Caco-2 (cell line): ENCODE measurements at regions of chr9 and their contacts with region 1.

Region 1: DNA sequence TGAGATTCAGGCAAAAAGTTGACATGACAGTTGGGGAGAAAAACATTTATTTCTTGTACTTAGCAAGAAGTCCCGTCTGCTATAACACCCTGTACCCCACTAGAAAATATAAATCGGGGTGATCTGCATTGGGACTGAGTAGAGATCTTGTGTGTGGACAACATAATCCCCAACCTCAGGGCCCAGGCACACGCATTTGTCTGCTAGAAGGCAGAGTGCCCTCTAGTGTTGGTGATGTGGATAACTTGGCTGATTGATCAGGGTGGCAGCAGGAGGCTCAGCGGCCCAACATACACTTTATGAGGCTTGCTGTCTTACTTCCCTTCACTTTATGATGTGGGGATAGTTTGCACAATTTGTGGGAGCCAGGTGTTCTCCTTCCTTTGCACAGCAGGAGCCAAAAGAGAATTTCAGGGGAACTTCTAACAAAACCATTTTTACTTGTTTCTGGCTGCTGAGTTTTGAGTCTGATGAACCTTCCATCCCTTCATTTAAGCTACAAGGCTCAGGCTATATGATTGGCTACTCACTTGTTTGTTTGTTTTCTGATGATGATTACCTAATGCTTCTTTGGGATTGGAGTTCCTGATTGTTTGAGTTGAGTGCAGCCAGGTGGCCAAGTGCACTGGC is 263.2 kb downstream of the DMAC1 start:
- DNase-seq: peak; percentile 48
- H3K4me3 ChIP-seq: no peak overlapping the region
- H3K4me3 Mint-ChIP-seq: no peak overlapping the region
- H3K27ac Mint-ChIP-seq: no peak overlapping the region
- H3K4me1 ChIP-seq: no peaks in the 10 kb centered on the region
- H3K4me1 Mint-ChIP-seq: no peaks in the 10 kb centered on the region
- H3K27me3 ChIP-seq: no peaks in the 10 kb centered on the region
- H3K27me3 Mint-ChIP-seq: peaks cover 18% of the 10 kb centered on the region
- CTCF ChIP-seq: peak; percentile 52 to 53

Region 2: GRCh38 chr9:6907772-6908381 is 628.5 kb before region 1 on chr9:
- CTCF ChIA-PET with region 1: no interaction called
- POLR2A ChIA-PET with region 1: no interaction called
- intact Hi-C with region 1: loop called (anchors 5 kb)
- DNase-seq: peak in 1 of 2 experiments; percentile 31
- H3K4me3 ChIP-seq: no peak overlapping the region
- H3K4me3 Mint-ChIP-seq: no peak overlapping the region
- H3K27ac Mint-ChIP-seq: no peak overlapping the region
- H3K4me1 ChIP-seq: peaks cover 8% of the 10 kb centered on the region; the same call in 1 of the 2 replicates
- H3K4me1 Mint-ChIP-seq: peaks cover 6% of the 10 kb centered on the region
- H3K27me3 ChIP-seq: no peaks in the 10 kb centered on the region
- H3K27me3 Mint-ChIP-seq: no peaks in the 10 kb centered on the region
- CTCF ChIP-seq: peak; percentile 59 to 61

Region 3: GRCh38 chr9:7273391-7273974 is 262.9 kb before region 1 on chr9:
- CTCF ChIA-PET with region 1: no interaction called
- POLR2A ChIA-PET with region 1: no interaction called
- intact Hi-C with region 1: loop called (anchors 1 kb)
- DNase-seq: peak in 1 of 2 experiments; percentile 7
- H3K4me3 ChIP-seq: no peak overlapping the region
- H3K4me3 Mint-ChIP-seq: no peak overlapping the region
- H3K27ac Mint-ChIP-seq: no peak overlapping the region
- H3K4me1 ChIP-seq: no peaks in the 10 kb centered on the region
- H3K4me1 Mint-ChIP-seq: no peaks in the 10 kb centered on the region
- H3K27me3 ChIP-seq: no peaks in the 10 kb centered on the region; the same call in none of the 2 replicates
- H3K27me3 Mint-ChIP-seq: peaks cover 15% of the 10 kb centered on the region
- CTCF ChIP-seq: peak in 1 of 2 experiments; percentile 49

Region 4: GRCh38 chr9:7402334-7403027 is 133.9 kb before region 1 on chr9:
- CTCF ChIA-PET with region 1: interaction called, 3 read pairs
- POLR2A ChIA-PET with region 1: no interaction called
- intact Hi-C with region 1: loop called (anchors 1 kb)
- DNase-seq: no peak
- H3K4me3 ChIP-seq: no peak overlapping the region
- H3K4me3 Mint-ChIP-seq: no peak overlapping the region
- H3K27ac Mint-ChIP-seq: no peak overlapping the region
- H3K4me1 ChIP-seq: no peaks in the 10 kb centered on the region
- H3K4me1 Mint-ChIP-seq: no peaks in the 10 kb centered on the region
- H3K27me3 ChIP-seq: no peaks in the 10 kb centered on the region
- H3K27me3 Mint-ChIP-seq: peaks cover 9% of the 10 kb centered on the region
- CTCF ChIP-seq: no peak

Region 5: GRCh38 chr9:7454624-7455023 is 81.8 kb before region 1 on chr9:
- CTCF ChIA-PET with region 1: no interaction called
- POLR2A ChIA-PET with region 1: no interaction called
- intact Hi-C with region 1: no loop called
- DNase-seq: no peak
- H3K4me3 ChIP-seq: no peak overlapping the region
- H3K4me3 Mint-ChIP-seq: no peak overlapping the region
- H3K27ac Mint-ChIP-seq: no peak overlapping the region
- H3K4me1 ChIP-seq: no peaks in the 10 kb centered on the region
- H3K4me1 Mint-ChIP-seq: no peaks in the 10 kb centered on the region
- H3K27me3 ChIP-seq: no peaks in the 10 kb centered on the region
- H3K27me3 Mint-ChIP-seq: peaks cover 10% of the 10 kb centered on the region
- CTCF ChIP-seq: no peak